ENCODE measurements at regions of chr17 and their contacts with region 1.

Region 1: DNA sequence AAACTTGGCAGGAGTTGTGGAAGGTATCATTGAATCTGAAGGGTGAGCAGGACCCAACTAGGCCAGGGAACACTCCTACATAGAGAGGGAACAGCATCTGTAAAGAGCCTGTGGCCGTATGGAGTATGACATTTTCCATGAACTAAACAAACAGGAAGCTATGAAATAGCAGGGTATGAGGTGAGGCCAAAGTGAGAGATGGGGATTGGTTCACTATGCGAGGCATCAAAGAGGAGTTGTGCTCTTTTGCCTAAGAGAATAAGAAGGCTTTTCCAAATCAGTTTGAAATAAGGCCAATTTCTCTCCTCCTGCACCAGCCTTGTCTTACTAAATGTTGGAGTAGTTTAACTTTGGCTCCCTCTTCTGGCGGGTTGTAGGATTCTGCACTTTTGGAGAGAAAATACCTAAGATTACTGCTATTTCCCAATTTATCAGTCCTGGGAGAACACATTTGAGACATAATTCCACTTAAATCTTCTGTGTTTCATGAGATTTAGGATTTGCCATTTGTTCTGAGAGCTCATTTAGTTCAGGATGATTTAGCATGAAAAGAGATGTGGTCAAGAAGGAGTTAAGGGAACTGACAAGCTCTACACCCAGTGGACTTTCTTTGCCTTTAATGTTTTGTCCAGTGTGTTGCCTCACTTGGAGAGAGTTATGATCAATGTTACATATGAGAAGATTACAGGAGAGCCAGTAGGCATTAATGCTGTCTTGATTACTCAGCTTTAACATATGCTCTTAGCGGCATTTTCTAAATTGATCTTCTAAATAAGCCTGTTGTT is 55.4 kb downstream of the TNRC6C start:
- DNase-seq: peak; percentile 34 to 58 (median 37)
- H3K4me3 ChIP-seq: no peak overlapping the region
- H3K4me3 Mint-ChIP-seq: peak overlapping the region in 1 of 7 donors; percentile 33
- H3K27ac ChIP-seq: no peak overlapping the region
- H3K27ac Mint-ChIP-seq: peak overlapping the region in 4 of 8 donors; percentile 10 to 54 (median 18)
- H3K4me1 ChIP-seq: peaks cover 6% of the 10 kb centered on the region
- H3K4me1 Mint-ChIP-seq: peaks cover 28 to 36% (median 35%) of the 10 kb centered on the region in 3 donors
- H3K27me3 ChIP-seq: no peaks in the 10 kb centered on the region
- H3K27me3 Mint-ChIP-seq: no peaks in the 10 kb centered on the region

Region 2: GRCh38 chr17:77772461-77772897 is 241.4 kb before region 1 on chr17:
- CTCF ChIA-PET with region 1: interaction called, 28 read pairs
- POLR2A ChIA-PET with region 1: no interaction called
- DNase-seq: peak; percentile 52 to 80 (median 59)
- H3K4me3 ChIP-seq: no peak overlapping the region
- H3K4me3 Mint-ChIP-seq: peak overlapping the region in 5 of 7 donors; percentile 24 to 76 (median 41)
- H3K27ac ChIP-seq: no peak overlapping the region
- H3K27ac Mint-ChIP-seq: peak overlapping the region in 6 of 8 donors; percentile 32 to 96 (median 81)
- H3K4me1 ChIP-seq: peaks cover 8% of the 10 kb centered on the region
- H3K4me1 Mint-ChIP-seq: peaks cover 13 to 18% (median 14%) of the 10 kb centered on the region in 3 donors
- H3K27me3 ChIP-seq: no peaks in the 10 kb centered on the region
- H3K27me3 Mint-ChIP-seq: peaks cover 0 to 5% of the 10 kb centered on the region in 2 donors

Region 3: GRCh38 chr17:78082988-78083387 is 69.1 kb after region 1 on chr17:
- CTCF ChIA-PET with region 1: no interaction called
- POLR2A ChIA-PET with region 1: no interaction called
- DNase-seq: no peak
- H3K4me3 ChIP-seq: no peak overlapping the region
- H3K4me3 Mint-ChIP-seq: no peak overlapping the region
- H3K27ac ChIP-seq: no peak overlapping the region
- H3K27ac Mint-ChIP-seq: no peak overlapping the region
- H3K4me1 ChIP-seq: no peaks in the 10 kb centered on the region
- H3K4me1 Mint-ChIP-seq: peaks cover 0 to 3% (median 2%) of the 10 kb centered on the region in 3 donors
- H3K27me3 ChIP-seq: no peaks in the 10 kb centered on the region
- H3K27me3 Mint-ChIP-seq: no peaks in the 10 kb centered on the region

Region 4: GRCh38 chr17:78237401-78238012 is 223.6 kb after region 1 on chr17:
- CTCF ChIA-PET with region 1: no interaction called
- POLR2A ChIA-PET with region 1: no interaction called
- DNase-seq: no peak
- H3K4me3 ChIP-seq: no peak overlapping the region
- H3K4me3 Mint-ChIP-seq: no peak overlapping the region
- H3K27ac ChIP-seq: no peak overlapping the region
- H3K27ac Mint-ChIP-seq: no peak overlapping the region
- H3K4me1 ChIP-seq: no peaks in the 10 kb centered on the region
- H3K4me1 Mint-ChIP-seq: peaks cover 3 to 5% (median 5%) of the 10 kb centered on the region in 3 donors
- H3K27me3 ChIP-seq: no peaks in the 10 kb centered on the region
- H3K27me3 Mint-ChIP-seq: peaks cover 8 to 10% of the 10 kb centered on the region in 2 donors

Measured in CD8-positive, alpha-beta memory T cell (primary cell).